Mammary epithelial cell (primary cell): ENCODE measurements at regions of chr11 and their contacts with region 1.

Region 1: DNA sequence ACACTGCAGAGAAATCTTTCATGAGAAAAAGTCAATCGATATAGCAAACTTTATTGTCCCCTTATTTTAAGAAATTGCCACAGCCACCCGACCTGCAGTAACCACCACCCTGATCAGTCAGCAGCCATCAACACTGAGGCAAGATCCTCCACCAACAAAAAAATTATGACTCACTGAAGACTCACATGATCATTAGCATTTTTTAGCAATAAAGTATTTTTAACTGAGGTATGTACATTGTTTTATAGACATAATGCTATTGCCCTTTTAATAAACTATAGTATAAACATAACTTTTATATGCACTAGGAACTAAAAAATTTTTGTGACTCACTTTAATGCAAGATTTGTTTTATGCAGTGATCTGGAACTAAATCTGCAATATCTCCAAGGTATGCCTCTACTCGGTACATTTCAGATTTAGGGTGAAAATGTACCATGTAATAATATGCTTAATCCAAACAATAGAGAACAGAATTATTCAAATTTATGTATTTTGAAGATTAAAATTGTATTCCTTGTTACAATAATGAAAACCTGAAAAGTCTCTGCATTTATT is 79.2 kb upstream of the CEP126 start:
- DNase-seq: no peak
- H3K4me3 ChIP-seq: no peak overlapping the region
- H3K27ac ChIP-seq: no peak overlapping the region
- H3K4me1 ChIP-seq: no peaks in the 10 kb centered on the region
- H3K27me3 ChIP-seq: peaks cover 6% of the 10 kb centered on the region
- CTCF ChIP-seq: no peak

Region 2: DNA sequence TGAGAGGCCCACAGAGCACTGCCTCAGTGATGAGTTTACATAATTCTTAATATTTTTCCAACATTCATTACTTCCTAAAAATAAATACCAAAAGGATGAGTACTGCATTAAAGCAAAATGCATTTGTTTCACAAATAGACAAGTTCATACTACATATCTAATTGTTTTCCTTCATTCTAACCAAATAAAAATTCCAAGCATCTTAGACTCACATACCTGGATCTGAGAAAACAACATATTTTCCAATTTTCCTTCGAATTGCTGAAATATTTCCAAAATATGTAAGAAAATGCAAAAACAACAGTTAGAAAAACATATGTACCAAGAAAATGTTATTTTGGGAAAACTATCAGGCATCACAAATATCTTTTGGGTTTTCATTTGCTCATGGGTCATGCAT is 48.7 kb before region 1 on chr11:
- CTCF ChIA-PET with region 1: no interaction called
- dilution Hi-C with region 1: no loop called
- in situ Hi-C with region 1: no loop called
- intact Hi-C with region 1: loop called (anchors 1 kb)
- DNase-seq: no peak
- H3K4me3 ChIP-seq: no peak overlapping the region
- H3K27ac ChIP-seq: no peak overlapping the region
- H3K4me1 ChIP-seq: no peaks in the 10 kb centered on the region
- H3K27me3 ChIP-seq: no peaks in the 10 kb centered on the region
- CTCF ChIP-seq: no peak